ENCODE measurements at regions of chr2 and their contacts with region 1.

Region 1: GRCh38 chr2:61854474-61855182 is 768 bp upstream of the FAM161A start:
- ATAC-seq: peak; percentile 85 to 90 (median 86)
- H3K4me3 ChIP-seq: peak overlapping the region; percentile 68 to 96 (median 95)
- H3K27ac ChIP-seq: peak overlapping the region; percentile 70 to 89
- H3K4me1 ChIP-seq: no peaks in the 10 kb centered on the region

Region 2: GRCh38 chr2:61233581-61233980 is 621.0 kb before region 1 on chr2:
- in situ Hi-C with region 1: no loop called
- ATAC-seq: no peak
- H3K4me3 ChIP-seq: no peak overlapping the region
- H3K27ac ChIP-seq: no peak overlapping the region
- H3K4me1 ChIP-seq: no peaks in the 10 kb centered on the region

Region 3: DNA sequence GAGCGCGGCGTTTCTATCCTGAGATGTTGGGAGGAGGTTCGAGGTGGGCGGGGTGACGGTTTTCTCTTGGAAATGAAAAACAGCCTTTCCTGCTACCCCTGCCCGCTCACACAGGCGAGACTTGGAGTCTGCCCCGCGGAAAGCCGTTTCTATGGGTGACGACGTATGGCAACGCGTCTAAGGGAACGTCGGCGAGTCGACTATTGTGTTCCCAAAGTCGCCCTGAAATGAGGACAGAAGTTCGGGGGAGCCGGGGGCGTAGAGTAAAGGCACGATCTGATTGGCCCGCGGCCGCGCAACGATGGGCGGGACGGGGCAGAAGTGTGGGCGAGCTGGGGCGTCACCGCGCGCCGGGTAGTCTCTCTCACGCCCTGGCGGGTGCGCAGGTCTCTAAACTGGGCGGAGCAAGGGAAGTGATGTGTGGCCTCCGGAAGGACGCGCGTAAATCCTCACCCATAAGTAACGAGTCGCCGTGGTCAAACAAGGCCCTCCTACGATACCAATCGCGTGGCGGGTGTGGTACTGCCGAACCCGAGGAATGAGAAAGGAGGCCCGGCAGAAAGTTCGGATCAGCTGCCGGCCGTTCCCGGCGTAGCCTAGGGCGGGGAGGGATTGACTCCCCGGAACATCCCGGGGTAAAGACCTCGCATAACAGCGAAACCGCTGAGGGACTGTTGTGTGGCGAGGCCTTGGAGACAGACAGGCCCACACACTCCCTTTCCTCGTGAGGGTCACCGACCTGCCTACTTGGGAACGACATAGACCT is 90.4 kb before region 1 on chr2:
- in situ Hi-C with region 1: loop called in 1 of 9 experiments (anchors 25 kb)
- ATAC-seq: peak; percentile 93 to 96 (median 95)
- H3K4me3 ChIP-seq: peak overlapping the region; percentile 57 to 84 (median 60)
- H3K27ac ChIP-seq: peak overlapping the region; percentile 96 to 97
- H3K4me1 ChIP-seq: peaks cover 0 to 2% of the 10 kb centered on the region in 2 donors

Measured in motor neuron (in vitro differentiated cells).